RWPE1 (cell line): ENCODE measurements at regions of chr1 and their contacts with region 1.

Region 1: GRCh38 chr1:7975212-7975865 is 13.8 kb downstream of the PARK7 start:
- DNase-seq: peak; percentile 85
- H3K27ac ChIP-seq: peak overlapping the region; percentile 57
- CTCF ChIP-seq: peak; percentile 92

Region 2: GRCh38 chr1:8015036-8015808 is 39.9 kb after region 1 on chr1:
- CTCF ChIA-PET with region 1: interaction called, 12 read pairs
- POLR2A ChIA-PET with region 1: no interaction called
- DNase-seq: peak; percentile 58
- H3K27ac ChIP-seq: no peak overlapping the region
- CTCF ChIP-seq: peak; percentile 69